Activated CD8-positive, alpha-beta T cell treated with anti-CD3 and anti-CD28 coated beads for 36 hours (primary cell): ENCODE measurements at regions of chr19 and their contacts with region 1.

Region 1: GRCh38 chr19:16041299-16041990 is 34.9 kb upstream of the TPM4 start:
- DNase-seq: peak; percentile 77
- ATAC-seq: peak; percentile 89
- H3K4me3 Mint-ChIP-seq: no peak overlapping the region
- H3K27ac Mint-ChIP-seq: no peak overlapping the region
- H3K4me1 Mint-ChIP-seq: peaks cover 9% of the 10 kb centered on the region
- H3K27me3 Mint-ChIP-seq: no peaks in the 10 kb centered on the region
- CTCF ChIP-seq: peak; percentile 99

Region 2: GRCh38 chr19:16062789-16063188 is 21.3 kb after region 1 on chr19:
- CTCF ChIA-PET with region 1: interaction called, 61 read pairs
- POLR2A ChIA-PET with region 1: no interaction called
- intact Hi-C with region 1: no loop called
- DNase-seq: peak; percentile 76
- ATAC-seq: peak; percentile 57
- H3K4me3 Mint-ChIP-seq: no peak overlapping the region
- H3K27ac Mint-ChIP-seq: no peak overlapping the region
- H3K4me1 Mint-ChIP-seq: peaks cover 26% of the 10 kb centered on the region
- H3K27me3 Mint-ChIP-seq: no peaks in the 10 kb centered on the region
- CTCF ChIP-seq: peak; percentile 96

Region 3: DNA sequence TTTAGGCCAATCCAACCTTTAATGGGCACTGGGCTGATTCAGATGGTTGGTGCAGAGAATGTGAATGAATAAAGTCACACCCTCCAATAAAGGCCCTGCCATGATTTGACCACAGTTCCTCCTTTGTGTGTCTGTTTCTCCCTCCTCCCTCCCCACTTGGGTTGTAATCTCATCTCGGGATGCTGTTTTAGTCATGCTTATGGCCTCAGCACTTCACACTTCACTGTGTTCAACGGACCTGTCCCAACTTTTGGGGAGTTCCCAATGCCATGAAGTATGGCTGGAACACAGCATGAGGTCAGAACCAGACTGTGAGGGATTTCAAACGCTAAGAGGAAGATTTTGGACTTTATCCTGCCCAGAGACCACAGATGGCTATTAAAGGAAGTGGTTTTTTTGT is 64.7 kb after region 1 on chr19:
- CTCF ChIA-PET with region 1: interaction called, 20 read pairs
- POLR2A ChIA-PET with region 1: interaction called, 3 read pairs
- intact Hi-C with region 1: no loop called
- DNase-seq: no peak
- ATAC-seq: no peak
- H3K4me3 Mint-ChIP-seq: no peak overlapping the region
- H3K27ac Mint-ChIP-seq: peak overlapping the region; percentile 56
- H3K4me1 Mint-ChIP-seq: peaks cover 3% of the 10 kb centered on the region
- H3K27me3 Mint-ChIP-seq: no peaks in the 10 kb centered on the region
- CTCF ChIP-seq: no peak

Region 4: DNA sequence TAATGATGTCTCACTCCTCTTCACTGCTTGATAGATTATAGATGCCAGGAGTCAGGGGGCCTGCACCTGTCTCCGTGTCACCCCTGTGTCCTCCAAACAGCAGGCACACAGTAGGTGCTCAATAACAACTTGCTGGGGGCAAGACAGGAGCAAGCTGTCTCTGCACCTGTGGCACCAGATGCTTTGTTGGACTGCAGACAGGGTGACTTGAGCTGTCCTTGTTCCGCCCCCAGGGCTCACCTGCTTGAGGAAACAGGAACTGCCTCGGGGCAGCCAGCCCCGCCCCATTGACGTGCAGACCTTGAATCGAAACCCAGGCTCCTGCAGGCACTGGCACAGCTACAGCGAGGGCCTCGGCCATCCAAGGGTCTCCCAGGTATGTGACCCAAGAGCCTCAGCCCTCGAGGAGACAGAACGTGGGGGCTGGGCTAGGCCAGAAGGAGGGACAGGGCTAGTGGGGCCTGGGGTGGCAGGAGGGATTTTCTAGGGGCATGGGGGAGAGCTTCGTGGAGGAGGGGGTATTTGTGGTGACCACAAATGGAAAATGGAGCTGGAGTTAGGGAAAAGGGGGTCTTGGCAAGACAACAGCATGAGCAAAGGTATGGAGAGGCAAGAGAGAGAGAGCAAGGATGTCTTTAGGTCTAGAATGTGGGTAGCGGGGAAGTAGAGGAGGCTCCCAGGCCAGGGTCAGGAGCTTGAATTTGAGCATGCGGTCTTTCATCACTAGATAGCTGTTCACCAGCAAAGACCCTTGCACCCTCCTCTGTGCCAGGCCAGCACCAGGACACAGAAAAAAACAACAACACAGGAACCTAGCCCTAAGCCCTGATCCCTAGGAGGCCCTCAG is 102.2 kb after region 1 on chr19 and contains the start of gene HSH2D:
- CTCF ChIA-PET with region 1: interaction called, 19 read pairs
- POLR2A ChIA-PET with region 1: no interaction called
- intact Hi-C with region 1: no loop called
- DNase-seq: peak; percentile 94
- ATAC-seq: peak; percentile 99
- H3K4me3 Mint-ChIP-seq: peak within 1 kb of the TSS; percentile 98
- H3K27ac Mint-ChIP-seq: peak within 1 kb of the TSS; percentile 98
- H3K4me1 Mint-ChIP-seq: peaks cover 34% of the 10 kb centered on the region
- H3K27me3 Mint-ChIP-seq: no peaks in the 10 kb centered on the region
- CTCF ChIP-seq: no peak
- total RNA-seq, gene HSH2D: 23.5 to 25.5 TPM

Region 5: GRCh38 chr19:16185123-16185767 is 143.8 kb after region 1 on chr19 and contains the start of gene FAM32A:
- CTCF ChIA-PET with region 1: interaction called, 36 read pairs
- POLR2A ChIA-PET with region 1: interaction called, 3 read pairs
- intact Hi-C with region 1: loop called (anchors 2 kb)
- DNase-seq: peak; percentile 100
- ATAC-seq: peak; percentile 97
- H3K4me3 Mint-ChIP-seq: peak within 1 kb of the TSS; percentile 100
- H3K27ac Mint-ChIP-seq: peak within 1 kb of the TSS; percentile 95
- H3K4me1 Mint-ChIP-seq: peaks cover 22% of the 10 kb centered on the region
- H3K27me3 Mint-ChIP-seq: no peaks in the 10 kb centered on the region
- CTCF ChIP-seq: no peak
- total RNA-seq, gene FAM32A: 41.7 to 44.7 TPM